HEK293 (cell line): ENCODE measurements at regions of chr15 and their contacts with region 1.

Region 1: DNA sequence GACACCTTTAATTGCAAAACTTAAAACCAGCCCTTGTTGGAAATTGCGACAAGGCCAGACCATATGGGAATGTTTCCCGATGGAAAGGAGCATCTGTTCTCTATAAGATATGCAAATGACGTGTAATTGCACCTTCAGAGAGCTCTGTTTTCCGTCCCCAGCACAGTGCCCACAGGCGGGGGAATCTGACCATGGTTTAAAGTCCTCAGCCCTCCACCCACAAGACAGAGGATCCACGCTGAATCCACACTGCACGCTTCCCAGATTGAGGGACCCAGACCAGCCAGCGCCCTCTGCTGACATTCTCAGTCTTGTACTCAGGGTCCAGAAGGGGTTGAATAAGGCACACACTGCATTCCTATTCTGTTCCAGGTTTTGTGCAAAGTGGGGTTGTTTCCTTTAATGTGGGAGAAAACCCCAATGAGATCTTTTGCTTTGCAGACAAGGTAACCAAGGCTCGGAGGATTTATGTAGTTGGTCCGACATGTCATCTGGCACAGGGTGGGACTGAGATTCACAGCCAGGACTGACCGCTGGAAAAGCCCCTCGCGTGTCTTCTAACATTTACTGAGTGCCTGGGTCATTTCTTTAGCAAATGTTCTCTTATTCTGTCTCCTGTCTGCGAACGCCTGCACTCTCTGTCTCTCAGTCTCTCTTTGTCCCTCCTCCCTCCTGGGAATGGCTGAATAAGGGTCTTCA is 36.8 kb upstream of the KLHL25 start:
- H3K4me3 ChIP-seq: no peak overlapping the region
- H3K27ac ChIP-seq: no peak overlapping the region
- H3K4me1 ChIP-seq: no peaks in the 10 kb centered on the region
- CTCF ChIP-seq: peak; percentile 59

Region 2: GRCh38 chr15:85800467-85801123 is 31.0 kb before region 1 on chr15:
- CTCF ChIA-PET with region 1: interaction called, 11 read pairs
- POLR2A ChIA-PET with region 1: no interaction called
- H3K4me3 ChIP-seq: no peak overlapping the region
- H3K27ac ChIP-seq: no peak overlapping the region
- H3K4me1 ChIP-seq: peaks cover 6% of the 10 kb centered on the region; the same call in 1 of the 2 replicates
- CTCF ChIP-seq: 0 out of 2 replicates have a peak, but pooled peaks have one; percentile 37

Region 3: DNA sequence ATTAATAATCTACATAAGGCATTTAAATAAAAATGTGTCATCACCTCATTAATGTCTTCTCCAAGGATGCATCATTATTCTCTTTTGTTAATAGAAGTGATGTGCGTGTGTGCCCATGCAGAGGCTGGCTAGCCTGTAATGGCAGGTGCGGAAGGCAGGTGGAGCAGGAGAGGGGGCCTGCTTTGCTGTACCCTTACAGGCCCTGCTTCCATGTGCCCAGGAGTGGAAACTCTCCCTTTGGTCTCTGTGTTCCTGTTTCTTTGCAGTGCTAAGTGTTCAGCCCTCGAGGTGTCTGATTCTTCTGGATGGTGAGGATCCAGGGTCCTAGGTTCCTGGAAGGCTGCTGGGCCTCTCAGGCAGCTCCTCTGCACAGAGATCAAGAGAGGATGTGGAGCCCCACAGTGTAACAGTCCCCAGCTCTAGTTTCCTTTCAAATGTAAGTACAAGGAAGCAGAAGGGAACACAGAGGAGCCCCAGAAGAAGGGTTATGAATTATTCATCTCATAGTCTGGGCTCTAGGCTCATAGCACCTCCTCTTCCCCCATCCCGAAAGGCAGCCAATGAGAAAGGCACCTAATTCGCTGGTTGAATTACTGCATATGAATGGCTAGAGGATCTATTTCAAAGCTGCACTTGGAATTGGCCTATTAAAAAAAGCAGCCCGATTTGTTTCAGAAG is 208.9 kb after region 1 on chr15:
- CTCF ChIA-PET with region 1: no interaction called
- POLR2A ChIA-PET with region 1: no interaction called
- H3K4me3 ChIP-seq: no peak overlapping the region
- H3K27ac ChIP-seq: no peak overlapping the region
- H3K4me1 ChIP-seq: no peaks in the 10 kb centered on the region
- CTCF ChIP-seq: no peak